ENCODE measurements at regions of chr20 and their contacts with region 1.

Region 1: DNA sequence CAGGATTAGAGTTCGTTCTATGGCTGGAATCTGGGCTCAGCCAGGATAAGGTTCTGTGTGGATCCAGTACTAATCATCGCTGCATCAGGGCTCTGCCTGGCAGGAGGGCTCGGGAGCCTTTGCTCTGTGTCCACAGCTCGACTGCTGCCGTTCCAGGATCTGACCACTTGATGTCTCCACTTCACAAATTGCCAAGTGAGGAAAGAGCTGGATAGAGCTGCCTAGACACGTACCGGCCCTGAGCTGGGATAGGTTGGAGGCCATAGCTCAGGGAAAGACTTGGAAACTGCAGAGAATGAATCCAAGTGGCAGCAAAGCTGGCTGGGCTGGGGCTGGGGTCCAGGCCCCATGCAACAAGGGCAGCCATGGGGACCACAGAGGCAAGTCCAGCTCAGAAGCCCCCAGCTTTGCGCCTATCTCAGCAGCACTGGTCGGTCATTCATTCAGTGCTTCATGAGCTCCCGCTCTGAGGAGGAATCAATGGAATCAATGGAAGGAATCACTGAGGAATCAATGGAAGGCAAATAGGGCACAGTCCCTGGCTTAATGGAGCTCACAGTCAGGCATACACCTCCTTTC is 38.0 kb upstream of the TOP1 start:
- DNase-seq: peak; percentile 75
- H3K4me3 ChIP-seq: no peak overlapping the region
- H3K27ac ChIP-seq: no peak overlapping the region
- H3K27me3 ChIP-seq: no peaks in the 10 kb centered on the region
- CTCF ChIP-seq: peak; percentile 94

Region 2: DNA sequence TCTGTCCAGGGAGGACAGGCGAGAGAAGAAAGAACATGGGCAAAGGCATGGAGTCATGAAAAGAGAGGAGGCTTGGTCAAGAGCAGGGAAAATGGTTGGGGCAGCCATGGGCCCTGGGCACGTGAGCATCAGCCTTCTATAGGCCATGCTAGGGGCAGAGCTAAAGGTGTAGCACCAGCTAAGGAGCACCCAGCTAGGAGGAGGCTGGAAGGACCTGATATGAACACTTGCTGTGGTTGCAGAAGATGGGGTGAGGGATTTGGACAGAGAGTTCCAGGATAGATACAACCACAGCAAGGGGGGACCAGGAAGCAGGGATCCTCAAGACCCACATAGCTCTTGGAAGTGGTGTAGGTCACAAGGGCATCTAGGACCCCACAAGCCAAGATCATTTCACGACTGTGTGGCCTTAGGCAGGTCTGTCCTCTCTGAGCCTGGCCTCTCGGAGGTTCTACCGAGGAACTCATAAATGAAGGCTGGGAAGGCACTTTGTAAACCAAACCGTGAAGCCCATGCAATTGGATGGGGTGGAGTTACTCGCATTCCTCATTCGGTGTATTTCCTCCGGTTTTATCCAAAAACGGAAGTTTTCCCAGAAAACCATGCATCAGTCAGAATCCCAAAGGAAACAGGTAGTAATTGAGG is 36.0 kb before region 1 on chr20:
- CTCF ChIA-PET with region 1: no interaction called
- POLR2A ChIA-PET with region 1: no interaction called
- DNase-seq: no peak
- H3K4me3 ChIP-seq: no peak overlapping the region
- H3K27ac ChIP-seq: peak overlapping the region; percentile 11
- H3K27me3 ChIP-seq: peaks cover 4% of the 10 kb centered on the region
- CTCF ChIP-seq: no peak

Region 3: GRCh38 chr20:40970201-40970600 is 20.4 kb before region 1 on chr20:
- CTCF ChIA-PET with region 1: interaction called, 21 read pairs
- POLR2A ChIA-PET with region 1: no interaction called
- DNase-seq: no peak
- H3K4me3 ChIP-seq: no peak overlapping the region
- H3K27ac ChIP-seq: no peak overlapping the region
- H3K27me3 ChIP-seq: no peaks in the 10 kb centered on the region
- CTCF ChIP-seq: peak; percentile 28; the same call in 1 of the 2 replicates

Region 4: DNA sequence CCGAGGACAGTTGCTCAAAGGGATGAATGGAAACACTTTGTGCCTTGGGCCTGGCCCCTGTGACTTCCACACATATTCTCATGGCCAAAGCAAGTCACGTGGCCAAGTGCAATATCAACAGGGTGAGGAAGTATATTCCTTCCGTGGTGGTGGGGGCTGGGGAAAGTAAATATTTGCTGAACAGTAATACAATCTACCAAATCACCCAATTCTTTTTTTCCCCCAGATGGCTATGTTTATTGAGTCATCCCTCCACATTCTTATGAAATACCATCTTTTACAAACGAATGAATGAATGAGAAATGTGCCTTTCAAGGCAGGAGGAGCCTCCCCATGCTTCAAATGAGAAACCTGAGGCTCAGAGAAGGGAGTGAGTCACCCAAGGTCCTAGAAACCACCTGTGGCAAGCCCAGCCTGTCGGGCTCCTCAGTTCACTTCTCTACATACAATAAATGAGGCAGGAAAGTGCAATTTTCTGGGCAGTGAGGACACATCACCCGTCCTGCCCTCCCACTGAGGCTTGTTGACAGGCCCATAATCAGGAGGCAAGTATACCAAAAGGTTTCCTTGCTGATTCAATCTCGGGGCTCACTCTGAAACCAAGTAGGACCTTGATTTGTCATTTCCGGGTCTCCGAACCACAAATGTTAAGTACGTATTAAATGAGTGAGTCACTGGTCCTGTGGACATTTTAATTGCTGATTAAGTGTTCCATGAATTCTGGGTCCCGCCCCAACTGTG is 12.7 kb after region 1 on chr20:
- CTCF ChIA-PET with region 1: interaction called, 13 read pairs
- POLR2A ChIA-PET with region 1: interaction called, 3 read pairs
- DNase-seq: peak; percentile 93
- H3K4me3 ChIP-seq: peak overlapping the region; percentile 57
- H3K27ac ChIP-seq: peak overlapping the region; percentile 100
- H3K27me3 ChIP-seq: no peaks in the 10 kb centered on the region
- CTCF ChIP-seq: no peak

Region 5: DNA sequence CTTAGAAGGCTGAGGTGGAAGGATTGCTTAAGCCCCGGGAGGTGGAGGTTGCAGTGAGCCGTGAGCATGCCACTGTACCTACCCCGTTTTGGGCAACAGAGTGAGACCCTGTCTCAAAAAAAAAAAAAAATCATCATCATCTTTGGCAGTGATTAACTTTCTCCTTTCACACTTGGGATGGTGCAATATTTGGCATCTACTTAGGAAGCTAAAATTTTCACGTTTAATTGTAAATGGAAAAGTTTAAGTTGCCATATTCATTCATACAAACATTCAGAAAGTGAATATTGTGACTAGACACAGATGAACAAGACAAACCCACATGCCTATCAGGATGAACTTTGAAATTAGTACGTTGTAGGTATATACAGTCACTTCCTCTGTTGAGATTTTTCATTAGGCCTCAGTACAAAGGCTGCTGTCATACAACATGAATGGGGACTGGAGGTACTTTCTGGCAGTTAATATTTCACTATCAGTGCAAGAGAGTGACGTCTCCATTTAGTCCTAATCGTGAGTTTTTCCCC is 48.3 kb after region 1 on chr20:
- CTCF ChIA-PET with region 1: interaction called, 10 read pairs
- POLR2A ChIA-PET with region 1: no interaction called
- DNase-seq: no peak
- H3K4me3 ChIP-seq: no peak overlapping the region
- H3K27ac ChIP-seq: no peak overlapping the region
- H3K27me3 ChIP-seq: no peaks in the 10 kb centered on the region
- CTCF ChIP-seq: no peak

Region 6: GRCh38 chr20:41072190-41072863 is 81.7 kb after region 1 on chr20:
- CTCF ChIA-PET with region 1: interaction called, 41 read pairs
- POLR2A ChIA-PET with region 1: no interaction called
- DNase-seq: no peak
- H3K4me3 ChIP-seq: no peak overlapping the region
- H3K27ac ChIP-seq: peak overlapping the region; percentile 68
- H3K27me3 ChIP-seq: no peaks in the 10 kb centered on the region
- CTCF ChIP-seq: no peak

Region 7: GRCh38 chr20:41086402-41087338 is 96.0 kb after region 1 on chr20:
- CTCF ChIA-PET with region 1: interaction called, 41 read pairs
- POLR2A ChIA-PET with region 1: interaction called, 4 read pairs
- DNase-seq: no peak
- H3K4me3 ChIP-seq: no peak overlapping the region
- H3K27ac ChIP-seq: no peak overlapping the region
- H3K27me3 ChIP-seq: no peaks in the 10 kb centered on the region
- CTCF ChIP-seq: no peak

Region 8: GRCh38 chr20:41339507-41340326 is 349.1 kb after region 1 on chr20:
- CTCF ChIA-PET with region 1: interaction called, 19 read pairs
- POLR2A ChIA-PET with region 1: no interaction called
- DNase-seq: no peak
- H3K4me3 ChIP-seq: peak overlapping the region; percentile 49
- H3K27ac ChIP-seq: peak overlapping the region; percentile 47
- H3K27me3 ChIP-seq: no peaks in the 10 kb centered on the region
- CTCF ChIP-seq: peak; percentile 94

Measured in AG04450 (cell line).